HepG2 (cell line): ENCODE measurements at regions of chr2 and their contacts with region 1.

Region 1: GRCh38 chr2:120520929-120521912 is 175.3 kb downstream of the INHBB start:
- DNase-seq: peak; percentile 60
- ATAC-seq: peak; percentile 37
- H3K4me3 ChIP-seq: no peak overlapping the region
- H3K27ac ChIP-seq: no peak overlapping the region
- H3K4me1 ChIP-seq: peaks cover 72% of the 10 kb centered on the region
- H3K27me3 ChIP-seq: peaks cover 0 to 5% of the 10 kb centered on the region in 2 experiments; a peak in 1 of 5 replicates
- CTCF ChIP-seq: peak; percentile 77
- EP300 ChIP-seq: no peak
- POLR2A ChIP-seq: no peak
- RAD21 ChIP-seq: peak; percentile 80

Region 2: DNA sequence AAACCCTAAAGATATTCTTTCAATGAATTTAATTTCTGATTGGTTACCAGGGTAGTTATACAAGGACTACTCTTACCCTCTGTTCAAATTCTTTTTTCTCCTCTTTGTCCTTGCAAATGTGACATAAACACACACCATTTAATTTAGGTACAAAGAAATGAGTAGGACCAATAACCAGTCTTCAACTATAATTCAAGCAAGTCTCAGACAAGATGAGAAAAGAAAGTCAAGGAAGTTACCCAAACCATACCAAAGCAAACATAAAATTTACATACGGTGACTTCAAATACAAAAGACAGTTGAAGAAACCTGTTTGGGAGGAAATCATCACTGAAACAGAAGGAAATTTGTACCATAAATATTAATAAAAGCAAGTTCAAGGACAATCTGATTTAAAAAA is 599.4 kb before region 1 on chr2:
- CTCF ChIA-PET with region 1: no interaction called
- POLR2A ChIA-PET with region 1: no interaction called
- in situ Hi-C with region 1: no loop called
- intact Hi-C with region 1: no loop called
- DNase-seq: no peak
- ATAC-seq: no peak
- H3K4me3 ChIP-seq: no peak overlapping the region
- H3K27ac ChIP-seq: no peak overlapping the region
- H3K4me1 ChIP-seq: no peaks in the 10 kb centered on the region
- H3K27me3 ChIP-seq: no peaks in the 10 kb centered on the region
- CTCF ChIP-seq: no peak
- EP300 ChIP-seq: no peak
- POLR2A ChIP-seq: no peak
- RAD21 ChIP-seq: no peak

Region 3: GRCh38 chr2:120453635-120453998 is 67.6 kb before region 1 on chr2:
- CTCF ChIA-PET with region 1: no interaction called
- POLR2A ChIA-PET with region 1: no interaction called
- in situ Hi-C with region 1: no loop called
- intact Hi-C with region 1: loop called (anchors 1 kb)
- DNase-seq: peak; percentile 61
- ATAC-seq: peak; percentile 61
- H3K4me3 ChIP-seq: no peak overlapping the region
- H3K27ac ChIP-seq: no peak overlapping the region
- H3K4me1 ChIP-seq: peaks cover 32% of the 10 kb centered on the region
- H3K27me3 ChIP-seq: peaks cover 13 to 39% of the 10 kb centered on the region in 2 experiments; a peak in 4 of 5 replicates
- CTCF ChIP-seq: no peak
- EP300 ChIP-seq: no peak
- POLR2A ChIP-seq: no peak
- RAD21 ChIP-seq: no peak

Region 4: DNA sequence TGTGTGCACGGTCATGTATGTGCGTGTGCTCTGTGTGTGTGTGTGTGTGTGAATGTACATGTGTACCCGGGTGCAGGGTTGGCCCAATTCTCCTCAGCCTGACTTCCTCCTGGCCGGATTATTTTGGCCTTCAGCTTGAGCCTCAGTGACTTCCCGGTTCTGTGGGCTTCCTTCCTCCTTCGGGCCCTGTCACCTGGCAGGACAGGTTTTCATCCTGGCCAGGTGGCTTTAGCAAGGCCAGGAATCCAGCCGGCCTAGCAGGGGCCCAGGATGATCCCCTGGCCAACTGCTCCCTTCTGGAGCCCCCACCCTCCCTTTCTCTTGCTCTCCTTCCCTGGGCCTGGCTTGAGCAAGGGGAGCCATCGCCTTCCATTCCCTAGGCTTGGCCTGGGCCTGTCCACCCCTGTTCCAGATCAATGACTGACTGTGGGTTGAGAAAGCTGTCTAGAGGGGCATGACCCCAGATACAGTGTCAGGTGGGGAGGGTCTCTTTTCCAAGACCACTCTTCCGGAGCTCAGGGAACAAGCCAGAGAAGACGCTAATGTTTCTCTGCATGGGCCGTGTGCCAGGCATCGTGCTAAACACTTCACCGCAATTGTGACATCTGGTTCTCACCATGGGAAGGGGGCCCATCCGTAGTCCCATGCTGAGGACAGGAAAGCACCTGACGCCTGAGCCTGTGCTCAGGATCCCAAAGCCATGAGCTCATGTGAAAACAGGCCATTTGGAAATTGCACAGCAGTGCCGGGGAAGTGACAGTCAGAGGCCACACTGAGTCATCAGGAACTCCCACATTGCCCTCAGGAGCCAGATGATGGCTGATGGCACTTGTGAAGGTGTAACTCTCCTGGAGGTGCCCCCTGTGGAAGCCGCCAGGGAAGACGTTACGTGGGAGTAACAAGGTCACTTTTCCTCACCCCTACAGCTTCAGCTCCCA is 34.5 kb before region 1 on chr2:
- CTCF ChIA-PET with region 1: no interaction called
- POLR2A ChIA-PET with region 1: no interaction called
- in situ Hi-C with region 1: no loop called
- intact Hi-C with region 1: no loop called
- DNase-seq: peak; percentile 80
- ATAC-seq: peak; percentile 63
- H3K4me3 ChIP-seq: no peak overlapping the region
- H3K27ac ChIP-seq: no peak overlapping the region
- H3K4me1 ChIP-seq: peaks cover 42% of the 10 kb centered on the region
- H3K27me3 ChIP-seq: peaks cover 0 to 5% of the 10 kb centered on the region in 2 experiments; a peak in 2 of 5 replicates
- CTCF ChIP-seq: no peak
- EP300 ChIP-seq: no peak
- POLR2A ChIP-seq: no peak
- RAD21 ChIP-seq: no peak

Region 5: DNA sequence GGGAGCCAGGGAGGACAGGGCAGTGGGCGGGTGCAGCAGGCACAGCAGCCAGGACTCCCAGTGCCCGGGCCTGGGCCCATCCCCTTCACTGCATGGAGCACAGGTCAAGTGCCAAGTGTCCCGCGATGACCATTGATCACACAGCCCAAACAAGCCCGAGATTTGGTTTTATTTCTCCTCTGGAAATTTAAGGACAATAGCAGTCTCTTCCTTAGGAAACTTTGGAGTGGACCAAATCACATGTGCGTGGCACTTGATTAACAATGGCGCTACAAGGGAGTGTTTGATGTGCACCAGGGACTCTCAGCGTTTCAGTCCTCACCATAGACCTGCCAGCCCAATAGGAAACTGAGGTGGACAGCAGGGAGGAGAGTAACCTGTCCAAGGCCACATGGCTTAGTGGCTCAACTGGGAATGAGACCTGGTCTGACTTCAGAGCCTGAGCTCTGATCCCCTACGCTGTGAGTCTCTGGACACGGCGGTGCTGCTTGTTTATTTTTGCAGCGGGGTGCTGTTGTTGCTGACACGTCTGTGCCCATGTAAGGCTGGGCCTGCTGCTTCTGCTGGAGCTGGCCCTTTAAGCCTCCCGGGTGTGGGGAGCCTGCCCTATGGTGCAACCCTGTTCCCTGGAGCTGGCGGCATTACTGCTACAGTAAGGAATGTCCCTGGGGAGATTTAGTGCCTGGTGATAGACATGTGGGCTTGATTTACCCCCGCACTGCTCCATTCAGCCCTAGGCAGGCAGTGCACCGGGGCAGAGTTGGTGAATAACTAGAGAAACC is 18.9 kb after region 1 on chr2:
- CTCF ChIA-PET with region 1: no interaction called
- POLR2A ChIA-PET with region 1: interaction called, 3 read pairs
- in situ Hi-C with region 1: no loop called
- intact Hi-C with region 1: loop called (anchors 2 kb)
- DNase-seq: peak; percentile 94
- ATAC-seq: peak; percentile 93
- H3K4me3 ChIP-seq: peak overlapping the region in 2 of 3 experiments; percentile 11 to 34; a peak in 1 of 6 replicates
- H3K27ac ChIP-seq: peak overlapping the region; percentile 82
- H3K4me1 ChIP-seq: peaks cover 73% of the 10 kb centered on the region
- H3K27me3 ChIP-seq: peaks cover 0 to 17% of the 10 kb centered on the region in 2 experiments; a peak in 3 of 5 replicates
- CTCF ChIP-seq: 0 out of 2 replicates have a peak, but pooled peaks have one; percentile 20
- EP300 ChIP-seq: peak; percentile 30 to 69; a peak in 2 of 4 replicates
- POLR2A ChIP-seq: peak; percentile 59 to 78; a peak in 3 of 4 replicates
- RAD21 ChIP-seq: peak; percentile 54; the same call in 1 of the 2 replicates